Transverse colon (tissue), 4 donors: ENCODE measurements at regions of chr4 and their contacts with region 1.

Region 1: GRCh38 chr4:141465171-141465570 is 171.2 kb upstream of the IL15 start:
- DNase-seq: no peak
- H3K4me3 ChIP-seq: no peak overlapping the region
- H3K27ac ChIP-seq: no peak overlapping the region
- H3K4me1 ChIP-seq: no peaks in the 10 kb centered on the region
- H3K27me3 ChIP-seq: no peaks in the 10 kb centered on the region
- CTCF ChIP-seq: no peak
- EP300 ChIP-seq: no peak
- POLR2A ChIP-seq: no peak

Region 2: DNA sequence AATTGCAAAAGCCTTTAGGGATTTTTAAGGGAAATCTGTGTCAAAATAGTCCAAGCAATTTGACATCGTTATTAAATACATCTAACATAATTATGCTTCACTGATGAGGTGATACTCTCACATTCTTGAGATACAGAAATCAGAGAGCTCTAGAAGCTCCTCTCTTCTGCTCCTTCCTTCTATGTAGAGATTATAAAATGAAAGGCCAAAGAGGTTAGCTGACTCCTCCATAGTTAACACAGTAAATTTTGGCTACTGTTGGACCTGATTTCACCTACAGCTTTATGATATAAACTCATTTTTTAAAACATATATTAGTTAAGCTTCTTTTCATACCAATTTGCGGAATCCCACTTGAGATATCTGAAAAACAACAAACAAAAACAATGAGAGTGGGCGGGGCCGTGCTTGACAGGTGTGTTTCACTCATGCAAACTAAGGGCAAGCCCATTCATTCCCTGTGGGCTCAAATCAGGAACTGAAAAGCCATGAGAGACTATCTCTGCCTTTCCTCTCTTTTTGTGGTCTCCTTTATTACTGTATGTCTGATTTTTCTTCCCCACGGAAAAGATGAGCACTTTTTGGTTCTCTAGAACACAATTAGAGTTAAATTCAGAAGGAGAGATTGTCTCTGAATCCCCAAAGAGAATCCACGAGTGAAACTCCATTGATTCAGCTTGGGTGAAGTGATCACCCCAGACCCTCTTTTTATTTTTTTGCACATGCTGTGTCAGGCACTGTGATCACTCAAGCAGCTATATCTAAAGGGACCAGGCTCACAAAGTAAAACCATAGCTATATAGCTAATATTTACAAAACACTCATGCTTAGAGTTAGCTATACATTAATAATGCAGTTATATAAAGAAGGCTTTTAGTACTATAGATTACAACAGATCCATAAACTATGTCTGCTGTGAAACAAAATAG is 737.5 kb after region 1 on chr4:
- in situ Hi-C with region 1: no loop called
- intact Hi-C with region 1: no loop called
- DNase-seq: no peak
- H3K4me3 ChIP-seq: no peak overlapping the region
- H3K27ac ChIP-seq: no peak overlapping the region
- H3K4me1 ChIP-seq: no peaks in the 10 kb centered on the region
- H3K27me3 ChIP-seq: no peaks in the 10 kb centered on the region
- CTCF ChIP-seq: no peak
- EP300 ChIP-seq: no peak
- POLR2A ChIP-seq: no peak

Region 3: DNA sequence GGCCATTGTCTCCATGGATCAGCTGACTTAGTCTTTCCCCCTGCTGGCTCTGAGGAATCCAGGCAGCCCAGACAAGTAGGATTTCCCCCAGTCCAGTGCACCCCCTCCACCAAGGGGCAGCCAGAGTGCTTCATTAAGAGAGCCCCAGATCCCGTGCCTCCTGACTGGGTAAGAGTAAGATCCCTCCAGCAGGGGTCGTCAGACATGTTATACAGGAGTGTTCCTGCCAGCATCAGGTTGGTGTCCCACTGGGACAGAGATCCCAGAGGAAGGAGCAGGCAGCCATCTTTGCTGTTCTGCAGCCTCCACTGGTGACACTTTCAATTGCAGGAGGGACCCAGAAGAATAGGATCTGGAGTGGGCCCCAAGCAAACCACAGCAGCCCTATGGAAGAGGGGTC is 1409.9 kb after region 1 on chr4:
- in situ Hi-C with region 1: no loop called
- intact Hi-C with region 1: loop called (anchors 5 kb)
- DNase-seq: no peak
- H3K4me3 ChIP-seq: no peak overlapping the region
- H3K27ac ChIP-seq: no peak overlapping the region
- H3K4me1 ChIP-seq: no peaks in the 10 kb centered on the region
- H3K27me3 ChIP-seq: no peaks in the 10 kb centered on the region
- CTCF ChIP-seq: no peak
- EP300 ChIP-seq: no peak
- POLR2A ChIP-seq: no peak